HepG2 (cell line): ENCODE measurements at regions of chr4 and their contacts with region 1.

Region 1: GRCh38 chr4:138870737-138871554 is 144.6 kb upstream of the NOCT start:
- DNase-seq: peak; percentile 55
- ATAC-seq: peak; percentile 84
- H3K4me3 ChIP-seq: no peak overlapping the region
- H3K27ac ChIP-seq: no peak overlapping the region
- H3K4me1 ChIP-seq: no peaks in the 10 kb centered on the region
- H3K27me3 ChIP-seq: peaks cover 0 to 13% of the 10 kb centered on the region in 2 experiments; a peak in 3 of 5 replicates
- CTCF ChIP-seq: peak; percentile 82
- EP300 ChIP-seq: no peak
- POLR2A ChIP-seq: no peak
- RAD21 ChIP-seq: peak; percentile 84

Region 2: GRCh38 chr4:137735561-137736104 is 1135.3 kb before region 1 on chr4:
- CTCF ChIA-PET with region 1: interaction called, 4 read pairs
- POLR2A ChIA-PET with region 1: no interaction called
- in situ Hi-C with region 1: no loop called
- intact Hi-C with region 1: loop called (anchors 1 kb)
- DNase-seq: no peak
- ATAC-seq: peak; percentile 27; the same call in 1 of the 3 replicates
- H3K4me3 ChIP-seq: no peak overlapping the region
- H3K27ac ChIP-seq: no peak overlapping the region
- H3K4me1 ChIP-seq: no peaks in the 10 kb centered on the region
- H3K27me3 ChIP-seq: no peaks in the 10 kb centered on the region
- CTCF ChIP-seq: no peak
- EP300 ChIP-seq: no peak
- POLR2A ChIP-seq: no peak
- RAD21 ChIP-seq: no peak

Region 3: GRCh38 chr4:137819964-137820383 is 1051.0 kb before region 1 on chr4:
- CTCF ChIA-PET with region 1: no interaction called
- POLR2A ChIA-PET with region 1: no interaction called
- in situ Hi-C with region 1: no loop called
- intact Hi-C with region 1: loop called (anchors 2 kb)
- DNase-seq: peak; percentile 45
- ATAC-seq: peak; percentile 97
- H3K4me3 ChIP-seq: no peak overlapping the region
- H3K27ac ChIP-seq: no peak overlapping the region
- H3K4me1 ChIP-seq: no peaks in the 10 kb centered on the region
- H3K27me3 ChIP-seq: no peaks in the 10 kb centered on the region
- CTCF ChIP-seq: peak; percentile 78
- EP300 ChIP-seq: no peak
- POLR2A ChIP-seq: no peak
- RAD21 ChIP-seq: peak; percentile 71

Region 4: DNA sequence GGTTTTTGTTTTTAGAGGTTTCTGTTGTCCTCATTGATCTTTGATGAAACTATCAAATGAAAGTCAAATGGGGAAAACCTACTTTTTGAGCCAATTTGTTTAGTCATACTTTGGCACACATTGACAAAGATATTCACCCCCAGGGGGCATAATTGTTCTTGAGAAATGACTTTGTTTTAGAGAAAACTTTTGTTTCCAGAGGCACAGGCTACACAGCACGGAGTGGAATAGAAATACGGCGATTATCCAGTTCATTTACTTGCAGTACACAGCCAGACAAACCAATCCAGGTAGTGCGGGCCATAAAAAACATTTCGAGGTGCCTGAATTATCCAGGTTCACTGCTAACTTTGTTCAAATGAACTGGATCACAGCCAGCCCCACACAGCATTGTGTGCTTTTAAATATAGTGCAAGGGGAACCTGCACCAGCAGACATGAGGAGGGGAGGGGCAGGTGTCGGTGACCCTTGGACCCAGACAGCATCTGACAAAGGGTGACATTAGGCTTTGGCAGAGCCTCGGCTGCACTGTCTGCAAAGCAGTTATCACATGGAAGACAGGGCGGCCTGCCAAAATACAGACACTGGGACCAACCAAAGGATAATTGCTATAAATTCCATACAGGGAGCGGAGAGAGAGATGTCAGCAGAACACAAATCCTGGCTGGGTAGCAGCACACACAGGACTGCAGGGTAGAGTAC is 35.0 kb before region 1 on chr4:
- CTCF ChIA-PET with region 1: no interaction called
- POLR2A ChIA-PET with region 1: no interaction called
- in situ Hi-C with region 1: no loop called
- intact Hi-C with region 1: loop called (anchors 1 kb)
- DNase-seq: peak; percentile 65
- ATAC-seq: peak; percentile 98
- H3K4me3 ChIP-seq: no peak overlapping the region
- H3K27ac ChIP-seq: no peak overlapping the region
- H3K4me1 ChIP-seq: peaks cover 9% of the 10 kb centered on the region
- H3K27me3 ChIP-seq: peaks cover 0 to 8% of the 10 kb centered on the region in 2 experiments; a peak in 1 of 5 replicates
- CTCF ChIP-seq: no peak
- EP300 ChIP-seq: no peak
- POLR2A ChIP-seq: no peak
- RAD21 ChIP-seq: no peak

Region 5: GRCh38 chr4:138859249-138859648 is 11.7 kb before region 1 on chr4:
- CTCF ChIA-PET with region 1: no interaction called
- POLR2A ChIA-PET with region 1: no interaction called
- in situ Hi-C with region 1: no loop called
- intact Hi-C with region 1: no loop called
- DNase-seq: no peak
- ATAC-seq: no peak
- H3K4me3 ChIP-seq: no peak overlapping the region
- H3K27ac ChIP-seq: no peak overlapping the region
- H3K4me1 ChIP-seq: no peaks in the 10 kb centered on the region
- H3K27me3 ChIP-seq: no peaks in the 10 kb centered on the region
- CTCF ChIP-seq: no peak
- EP300 ChIP-seq: no peak
- POLR2A ChIP-seq: no peak
- RAD21 ChIP-seq: no peak

Region 6: DNA sequence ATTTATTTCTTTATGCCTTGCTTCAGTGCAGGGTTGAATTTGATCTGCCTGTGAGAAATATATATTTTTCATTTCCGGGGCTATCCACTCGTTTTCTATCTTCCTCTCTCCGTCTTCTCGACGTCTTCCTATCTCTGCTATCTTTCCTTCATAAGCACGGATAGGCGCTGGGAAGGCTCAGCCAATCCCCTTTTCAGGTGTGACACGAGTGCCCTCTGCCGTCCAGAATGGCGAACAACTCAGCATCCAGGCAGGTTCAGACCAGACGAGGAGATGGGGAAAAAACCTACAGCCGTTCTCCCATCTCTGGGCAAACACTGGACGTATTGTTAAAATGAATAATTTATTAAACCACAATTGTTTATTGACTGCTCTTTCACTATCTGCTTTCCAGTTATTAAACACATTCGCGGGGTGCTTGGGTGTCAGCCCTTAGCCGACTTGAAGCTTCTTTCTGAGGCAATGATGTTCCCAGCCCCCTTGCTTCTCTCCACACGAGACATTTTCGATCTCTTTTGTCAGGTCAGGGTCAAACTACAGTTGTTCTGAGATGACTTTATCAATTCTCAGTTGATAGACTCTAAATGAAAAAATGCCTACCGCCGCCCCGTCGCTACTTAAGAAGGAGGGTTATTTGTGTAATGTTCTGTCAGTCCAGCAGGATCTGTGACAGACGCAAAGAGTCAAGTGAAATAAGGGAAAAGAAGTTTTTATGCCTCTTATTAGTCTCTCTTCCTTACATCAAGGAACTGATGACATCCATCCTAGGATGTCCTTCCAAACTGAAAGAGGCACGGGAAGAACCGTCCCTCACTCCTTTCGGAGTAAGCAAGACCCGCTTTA is 48.4 kb after region 1 on chr4:
- CTCF ChIA-PET with region 1: no interaction called
- POLR2A ChIA-PET with region 1: no interaction called
- in situ Hi-C with region 1: no loop called
- intact Hi-C with region 1: loop called (anchors 2 kb)
- DNase-seq: peak; percentile 49
- ATAC-seq: peak; percentile 99
- H3K4me3 ChIP-seq: no peak overlapping the region
- H3K27ac ChIP-seq: no peak overlapping the region
- H3K4me1 ChIP-seq: no peaks in the 10 kb centered on the region
- H3K27me3 ChIP-seq: no peaks in the 10 kb centered on the region
- CTCF ChIP-seq: peak; percentile 87
- EP300 ChIP-seq: no peak
- POLR2A ChIP-seq: no peak
- RAD21 ChIP-seq: peak; percentile 63

Region 7: GRCh38 chr4:138938366-138938690 is 67.4 kb after region 1 on chr4:
- CTCF ChIA-PET with region 1: no interaction called
- POLR2A ChIA-PET with region 1: no interaction called
- in situ Hi-C with region 1: no loop called
- intact Hi-C with region 1: loop called (anchors 2 kb)
- DNase-seq: peak; percentile 27
- ATAC-seq: peak; percentile 86
- H3K4me3 ChIP-seq: no peak overlapping the region
- H3K27ac ChIP-seq: no peak overlapping the region
- H3K4me1 ChIP-seq: peaks cover 27% of the 10 kb centered on the region
- H3K27me3 ChIP-seq: peaks cover 0 to 1% of the 10 kb centered on the region in 2 experiments; a peak in 1 of 5 replicates
- CTCF ChIP-seq: peak; percentile 73
- EP300 ChIP-seq: no peak
- POLR2A ChIP-seq: no peak
- RAD21 ChIP-seq: peak; percentile 46; the same call in 1 of the 2 replicates